Activated T-helper 1 cell treated with anti-CD3 and anti-CD28 coated beads, Interleukin-12 subunit alpha, Interleukin-12 subunit beta, Interleukin-2, Interleukin-4 antibody, amounts not matched to agents 30 ng/mL and 10 ng/mL and 1 ng/mL, durations not matched to agents 14 hours and 24 hours and 36 hours (primary cell): ENCODE measurements at regions of chr12 and their contacts with region 1.

Region 1: GRCh38 chr12:11648831-11649702 is at the start of gene ETV6:
- DNase-seq: peak; percentile 74
- H3K4me3 Mint-ChIP-seq: peak within 1 kb of the TSS; percentile 95
- H3K27ac Mint-ChIP-seq: peak within 1 kb of the TSS; percentile 99
- H3K4me1 Mint-ChIP-seq: peaks cover 29% of the 10 kb centered on the region
- H3K27me3 Mint-ChIP-seq: peaks cover 3% of the 10 kb centered on the region
- total RNA-seq, gene ETV6: 117 and 131 TPM in 2 replicates

Region 2: DNA sequence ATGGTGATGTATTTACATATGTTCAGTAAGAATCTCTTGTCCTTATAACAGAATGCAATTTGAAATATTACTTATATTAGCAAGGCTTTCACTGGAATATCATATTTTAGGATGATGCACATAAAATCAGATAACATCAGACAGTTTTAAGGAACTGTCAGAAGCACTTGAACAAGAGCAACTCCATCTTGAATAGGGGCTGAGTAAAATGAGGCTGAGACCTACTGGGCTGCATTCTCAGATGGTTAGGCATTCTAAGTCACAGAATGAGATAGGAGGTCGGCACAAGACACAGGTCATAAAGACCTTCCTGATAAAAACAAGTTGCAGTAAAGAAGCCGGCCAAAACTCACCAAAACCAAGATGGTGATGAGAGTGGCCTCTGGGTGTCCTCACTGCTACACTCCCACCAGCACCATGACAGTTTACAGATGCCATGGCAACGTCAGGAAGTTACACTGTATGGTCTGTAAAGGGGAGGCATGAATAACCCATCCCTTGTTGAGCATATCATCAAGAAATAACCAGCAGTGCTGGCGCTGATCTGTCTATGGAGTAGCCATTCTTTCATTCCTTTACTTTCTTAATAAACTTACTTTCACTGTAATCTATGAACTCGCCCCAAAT is 27.2 kb before region 1 on chr12:
- intact Hi-C with region 1: no loop called
- DNase-seq: no peak
- H3K4me3 Mint-ChIP-seq: no peak overlapping the region
- H3K27ac Mint-ChIP-seq: no peak overlapping the region
- H3K4me1 Mint-ChIP-seq: peaks cover 17% of the 10 kb centered on the region
- H3K27me3 Mint-ChIP-seq: peaks cover 2% of the 10 kb centered on the region

Region 3: GRCh38 chr12:11661491-11662089 is 12.5 kb after region 1 on chr12:
- intact Hi-C with region 1: loop called (anchors 1 kb)
- DNase-seq: no peak
- H3K4me3 Mint-ChIP-seq: no peak overlapping the region
- H3K27ac Mint-ChIP-seq: peak overlapping the region; percentile 46
- H3K4me1 Mint-ChIP-seq: peaks cover 87% of the 10 kb centered on the region
- H3K27me3 Mint-ChIP-seq: no peaks in the 10 kb centered on the region

Region 4: GRCh38 chr12:11765817-11766794 is 117.0 kb after region 1 on chr12:
- intact Hi-C with region 1: loop called (anchors 1 kb)
- DNase-seq: peak; percentile 19
- H3K4me3 Mint-ChIP-seq: peak overlapping the region; percentile 47
- H3K27ac Mint-ChIP-seq: peak overlapping the region; percentile 93
- H3K4me1 Mint-ChIP-seq: peaks cover 100% of the 10 kb centered on the region
- H3K27me3 Mint-ChIP-seq: no peaks in the 10 kb centered on the region

Region 5: DNA sequence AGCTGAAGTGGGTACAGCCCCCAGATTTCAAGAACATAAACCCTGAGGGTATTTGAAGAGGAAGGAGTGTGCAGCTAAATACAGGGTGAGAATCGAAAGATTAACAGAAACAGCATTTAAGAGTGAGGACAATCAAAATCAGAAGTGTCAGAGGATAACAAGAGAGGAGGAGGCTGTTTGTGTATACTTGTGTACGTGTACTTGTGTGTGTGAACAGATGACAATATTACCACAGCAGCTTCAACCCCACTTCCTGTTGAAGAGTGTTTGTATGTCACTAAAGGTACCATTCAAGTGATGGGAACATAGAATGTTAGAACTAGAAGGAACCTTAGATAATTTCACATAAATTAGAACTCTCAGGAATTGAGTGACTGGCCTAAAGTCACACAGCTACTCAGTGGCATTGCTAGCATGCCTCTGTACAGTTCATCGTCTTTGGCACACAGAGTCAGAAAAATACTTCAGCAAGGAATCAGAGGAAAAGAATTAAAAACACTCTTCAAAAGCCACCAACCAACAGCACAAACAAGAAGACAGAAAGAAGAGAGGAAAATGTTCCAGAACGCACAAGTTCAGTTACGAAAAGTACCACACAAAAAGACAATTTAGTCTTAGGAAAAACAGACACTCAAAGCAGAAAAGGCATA is 257.3 kb after region 1 on chr12:
- intact Hi-C with region 1: loop called (anchors 1 kb)
- DNase-seq: no peak
- H3K4me3 Mint-ChIP-seq: peak overlapping the region; percentile 30
- H3K27ac Mint-ChIP-seq: peak overlapping the region; percentile 88
- H3K4me1 Mint-ChIP-seq: peaks cover 53% of the 10 kb centered on the region
- H3K27me3 Mint-ChIP-seq: no peaks in the 10 kb centered on the region

Region 6: DNA sequence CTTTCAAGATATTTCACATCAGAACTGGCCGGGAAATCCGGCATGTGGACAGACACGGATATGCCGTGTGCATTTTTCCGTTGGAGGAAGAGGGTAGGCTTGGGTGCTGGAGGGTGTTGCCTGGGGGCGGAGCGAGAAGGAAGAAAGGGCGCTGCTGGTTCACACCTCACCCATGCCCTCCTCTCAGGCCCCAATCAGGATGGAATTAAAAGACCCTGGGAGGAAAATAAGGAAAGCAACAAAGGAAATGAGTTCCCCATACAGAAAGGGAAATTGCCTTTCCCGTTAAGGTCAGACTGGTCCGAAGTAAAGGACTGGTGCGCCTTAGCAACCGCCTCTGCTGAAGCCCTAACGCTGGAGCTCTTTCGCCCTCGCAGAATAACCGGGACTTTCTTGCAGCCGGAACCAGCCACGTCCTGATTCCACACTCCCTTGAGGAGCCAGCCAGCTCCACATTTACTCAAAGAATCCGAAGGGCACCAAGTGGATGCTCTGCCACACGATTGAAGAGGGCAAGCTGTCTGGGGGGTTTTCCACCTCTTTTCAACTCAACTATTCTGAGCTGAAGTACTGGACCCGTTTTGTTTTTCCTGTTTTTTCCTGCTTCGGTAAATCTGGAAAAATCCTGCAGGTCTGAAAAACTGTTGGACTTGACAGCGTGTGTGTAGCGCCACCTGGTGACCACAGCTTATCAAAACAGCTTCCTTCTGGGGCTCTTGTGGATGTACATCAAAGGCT is 384.0 kb after region 1 on chr12:
- intact Hi-C with region 1: loop called (anchors 1 kb)
- DNase-seq: peak; percentile 57
- H3K4me3 Mint-ChIP-seq: peak overlapping the region; percentile 83
- H3K27ac Mint-ChIP-seq: peak overlapping the region; percentile 97
- H3K4me1 Mint-ChIP-seq: peaks cover 74% of the 10 kb centered on the region
- H3K27me3 Mint-ChIP-seq: no peaks in the 10 kb centered on the region

Region 7: DNA sequence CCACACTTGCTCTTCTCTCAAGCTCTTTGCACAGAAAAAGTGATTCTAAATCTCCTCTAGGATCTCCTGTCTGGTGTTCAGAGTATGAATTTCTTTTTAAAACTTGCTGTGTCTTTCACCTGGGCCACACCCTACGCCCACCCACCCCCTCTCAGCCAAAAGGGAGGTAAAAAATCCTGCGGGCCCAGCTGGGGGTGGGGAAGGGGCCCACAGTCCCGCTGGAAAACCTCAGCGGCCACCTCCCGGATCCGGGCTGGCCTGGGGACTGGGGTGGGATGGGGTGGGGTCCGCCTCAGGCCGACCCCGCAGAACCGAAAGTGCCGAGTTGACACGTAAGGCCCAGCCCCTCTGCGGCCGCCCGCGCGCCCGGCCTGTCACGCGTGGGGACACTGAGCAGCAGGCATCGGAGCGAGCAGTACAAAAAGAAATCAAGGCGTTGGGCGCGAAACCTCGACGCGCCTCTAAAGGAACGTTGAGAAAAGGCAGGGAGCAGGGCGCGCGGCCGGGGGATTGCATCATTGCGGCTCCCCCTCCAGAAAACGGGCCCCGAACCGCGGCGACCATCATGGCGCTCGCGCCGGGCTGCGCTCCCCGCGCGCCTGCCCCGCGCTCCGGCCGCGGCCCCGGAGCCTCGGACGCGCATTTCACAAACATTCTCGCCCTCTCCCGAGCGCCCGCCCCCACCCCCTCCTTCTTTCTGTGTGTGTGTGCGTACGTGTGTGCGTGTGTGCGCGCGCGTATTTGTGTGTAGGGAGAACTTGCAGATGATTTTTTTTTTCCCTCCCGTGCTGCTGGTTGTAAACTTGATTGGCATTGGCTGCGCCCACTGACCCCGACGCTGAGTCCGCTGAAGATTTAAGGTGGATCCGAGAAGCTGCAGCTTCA is 1075.8 kb after region 1 on chr12:
- intact Hi-C with region 1: loop called (anchors 5 kb)
- DNase-seq: peak; percentile 88
- H3K4me3 Mint-ChIP-seq: peak overlapping the region; percentile 90
- H3K27ac Mint-ChIP-seq: peak overlapping the region; percentile 96
- H3K4me1 Mint-ChIP-seq: peaks cover 56% of the 10 kb centered on the region
- H3K27me3 Mint-ChIP-seq: peaks cover 3% of the 10 kb centered on the region